ENCODE measurements at regions of chr9 and their contacts with region 1.

Region 1: GRCh38 chr9:131366761-131367401 is 27.0 kb upstream of the PRRC2B start:
- DNase-seq: peak in 3 of 5 donors; percentile 39 to 55 (median 49)
- ATAC-seq: peak; percentile 72 to 80 (median 78)
- H3K4me3 ChIP-seq: no peak overlapping the region
- H3K27ac ChIP-seq: no peak overlapping the region
- H3K4me1 ChIP-seq: peaks cover 0 to 19% (median 4%) of the 10 kb centered on the region in 12 donors
- H3K27me3 ChIP-seq: no peaks in the 10 kb centered on the region
- CTCF ChIP-seq: peak in 10 of 12 donors; percentile 20 to 59 (median 52)
- POLR2A ChIP-seq: no peak

Region 2: DNA sequence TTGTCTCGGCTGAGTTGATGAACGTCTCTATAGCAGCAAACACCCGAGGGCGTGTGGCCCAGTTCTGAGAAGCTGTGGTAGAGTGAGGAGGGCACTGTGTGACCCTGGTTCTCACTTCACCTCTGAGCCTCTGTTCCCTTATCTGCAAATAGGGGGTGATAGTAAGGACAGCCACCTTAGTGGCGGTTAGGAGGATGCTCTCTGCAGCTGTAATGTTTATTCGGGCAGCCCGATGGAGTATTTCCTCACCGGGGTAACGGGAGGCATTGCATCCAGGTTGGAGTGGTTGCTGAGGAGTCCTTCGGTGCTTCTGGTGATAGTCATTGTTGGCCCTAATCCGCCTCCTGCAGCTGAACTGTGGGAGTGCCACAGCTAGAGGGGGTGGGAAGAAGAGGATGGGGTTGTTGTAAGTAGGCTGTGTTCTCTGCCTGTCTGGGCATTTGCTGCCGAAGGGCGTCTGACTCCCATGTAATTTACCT is 40.9 kb after region 1 on chr9:
- intact Hi-C with region 1: loop called in 2 of 10 experiments (anchors 5 kb)
- DNase-seq: peak in 3 of 5 donors; percentile 45 to 71 (median 66)
- ATAC-seq: peak; percentile 57 to 69 (median 62)
- H3K4me3 ChIP-seq: peak overlapping the region in 9 of 12 donors; percentile 6 to 40 (median 21)
- H3K27ac ChIP-seq: peak overlapping the region in 11 of 12 donors; percentile 41 to 89 (median 80)
- H3K4me1 ChIP-seq: peaks cover 31 to 99% (median 93%) of the 10 kb centered on the region in 12 donors
- H3K27me3 ChIP-seq: no peaks in the 10 kb centered on the region
- CTCF ChIP-seq: peak in 11 of 12 donors; percentile 18 to 56 (median 45)
- POLR2A ChIP-seq: no peak

Region 3: DNA sequence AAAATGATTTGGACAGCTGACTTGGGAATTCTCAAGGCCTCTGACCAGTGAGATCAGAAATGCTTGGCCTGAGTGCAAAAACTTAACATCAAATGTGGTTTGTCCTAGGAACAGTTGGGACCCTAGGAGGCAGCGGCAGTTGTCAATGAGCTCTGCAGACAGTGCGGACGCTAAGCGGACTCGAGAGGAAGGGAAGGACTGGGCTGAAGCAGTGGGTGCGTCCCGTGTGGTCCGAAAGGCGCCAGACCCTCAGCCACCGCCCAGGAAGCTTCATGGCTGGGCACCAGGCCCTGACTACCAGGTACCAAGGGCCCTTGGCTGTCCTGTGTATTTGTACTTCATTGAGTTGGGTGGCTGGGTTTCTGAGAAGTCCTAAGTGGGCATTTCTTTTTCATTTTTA is 92.2 kb after region 1 on chr9:
- intact Hi-C with region 1: no loop called
- DNase-seq: no peak
- ATAC-seq: no peak
- H3K4me3 ChIP-seq: no peak overlapping the region
- H3K27ac ChIP-seq: no peak overlapping the region
- H3K4me1 ChIP-seq: peaks cover 0 to 4% (median 0%) of the 10 kb centered on the region in 12 donors
- H3K27me3 ChIP-seq: no peaks in the 10 kb centered on the region
- CTCF ChIP-seq: no peak
- POLR2A ChIP-seq: no peak

Region 4: DNA sequence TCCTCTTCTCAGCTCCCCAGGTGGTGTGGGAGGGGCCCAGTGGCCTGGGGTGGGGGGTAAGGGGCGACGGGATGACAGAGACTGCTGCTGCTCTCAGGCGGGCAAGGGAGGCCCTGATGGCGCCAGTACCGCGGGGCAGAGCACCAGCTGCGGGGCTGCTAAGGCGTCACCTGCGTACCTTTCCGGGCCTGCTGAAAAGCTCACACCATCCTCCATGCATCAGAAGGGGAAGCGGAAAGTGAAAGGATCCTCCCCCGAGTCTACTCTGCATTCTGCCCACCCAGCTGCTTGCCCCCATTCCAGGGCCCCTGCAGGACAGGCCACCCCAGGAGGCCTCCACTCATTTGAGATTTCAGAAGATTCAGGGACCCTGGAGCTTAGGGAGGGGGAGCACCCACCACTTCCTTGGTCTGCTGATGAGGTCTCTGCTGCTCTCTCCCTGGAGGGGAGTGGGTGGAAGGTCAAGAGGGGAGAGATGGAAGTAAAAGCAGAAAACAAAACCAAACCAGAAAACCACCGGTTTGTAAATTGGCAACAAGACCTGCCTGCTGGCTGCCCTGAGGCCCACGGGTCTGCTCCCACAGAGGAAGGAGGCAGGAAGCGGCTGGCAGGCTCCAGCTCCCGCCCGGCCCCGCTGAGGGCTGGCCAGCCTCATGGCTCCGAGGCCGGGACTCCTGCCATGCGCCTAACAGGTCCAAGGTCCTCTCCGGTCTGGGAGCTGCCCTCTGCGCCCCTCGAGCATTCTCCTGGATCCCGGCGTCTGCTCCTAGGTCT is 212.0 kb after region 1 on chr9:
- intact Hi-C with region 1: loop called in 1 of 10 experiments (anchors 10 kb)
- DNase-seq: peak in 1 of 5 donors; percentile 18
- ATAC-seq: no peak
- H3K4me3 ChIP-seq: no peak overlapping the region
- H3K27ac ChIP-seq: peak overlapping the region in 1 of 12 donors; percentile 55
- H3K4me1 ChIP-seq: peaks cover 0 to 22% (median 8%) of the 10 kb centered on the region in 12 donors
- H3K27me3 ChIP-seq: no peaks in the 10 kb centered on the region
- CTCF ChIP-seq: no peak
- POLR2A ChIP-seq: no peak